Ascending aorta (tissue), 2 donors: ENCODE measurements at regions of chr6 and their contacts with region 1.

Region 1: DNA sequence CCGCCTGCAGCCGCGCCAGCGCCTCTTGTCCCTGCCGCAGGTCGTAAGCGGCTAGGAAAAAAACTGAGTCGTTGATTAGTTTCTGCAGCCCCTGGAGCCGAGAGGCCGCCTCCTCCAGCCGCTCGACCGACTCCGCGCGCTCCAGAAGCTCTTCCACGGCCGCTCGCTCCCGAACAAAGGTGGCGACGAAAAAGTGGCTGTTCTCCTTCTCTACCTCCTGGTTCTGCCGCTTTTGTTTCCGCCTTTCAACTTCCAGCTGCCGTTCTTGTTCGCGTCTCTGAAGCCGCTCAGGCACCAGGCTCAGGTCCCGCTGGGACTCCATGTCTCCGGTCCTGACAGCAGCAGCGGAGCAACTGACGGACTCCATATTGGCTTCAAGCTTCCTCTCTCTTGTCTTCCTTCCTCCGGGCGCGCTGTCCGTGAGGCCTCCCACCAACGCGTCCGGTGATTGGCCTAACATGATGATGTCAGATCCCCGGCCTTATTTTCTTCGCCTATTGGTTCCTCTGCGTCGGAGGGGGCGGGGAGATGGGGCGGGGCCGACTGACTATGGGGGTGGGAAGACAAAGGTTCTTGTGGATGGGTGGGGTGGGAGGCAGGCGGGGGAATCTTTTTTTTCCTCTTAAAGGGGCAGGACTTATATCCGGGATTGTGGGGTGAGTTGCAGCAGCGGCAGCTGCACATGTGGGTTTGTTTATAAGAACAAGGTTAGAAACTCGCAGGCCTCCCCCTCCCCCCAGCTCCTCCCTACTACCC is at the start of gene TBCC:
- DNase-seq: peak; percentile 94 to 99
- H3K4me3 ChIP-seq: peak within 1 kb of the TSS; percentile 83 to 90
- H3K27ac ChIP-seq: peak within 1 kb of the TSS; percentile 88 to 93
- H3K4me1 ChIP-seq: peaks cover 10 to 20% of the 10 kb centered on the region in 2 donors
- H3K27me3 ChIP-seq: no peaks in the 10 kb centered on the region
- CTCF ChIP-seq: no peak
- total RNA-seq, gene TBCC: 50.8 TPM

Region 2: DNA sequence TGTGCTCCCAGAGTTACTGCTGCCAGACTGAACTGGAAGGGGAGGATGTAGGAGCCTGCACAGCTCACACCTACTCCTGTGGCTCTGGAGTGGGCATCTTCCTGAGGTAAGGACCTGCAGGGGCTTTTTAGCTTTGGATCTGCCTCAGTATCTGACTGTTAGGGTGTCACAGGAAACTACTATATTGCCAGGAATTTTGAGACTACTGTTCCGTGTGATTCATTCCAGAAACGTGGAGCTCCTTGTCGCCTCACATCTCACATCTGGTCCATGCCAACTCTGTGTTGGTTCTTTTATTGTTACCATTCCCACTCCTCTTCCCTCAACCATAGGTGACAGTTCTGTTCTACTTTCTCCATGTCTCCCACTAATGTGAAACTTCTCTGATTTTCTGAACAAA is 57.6 kb before region 1 on chr6:
- intact Hi-C with region 1: no loop called
- DNase-seq: no peak
- H3K4me3 ChIP-seq: no peak overlapping the region
- H3K27ac ChIP-seq: no peak overlapping the region
- H3K4me1 ChIP-seq: peaks cover 5 to 18% of the 10 kb centered on the region in 2 donors
- H3K27me3 ChIP-seq: no peaks in the 10 kb centered on the region
- CTCF ChIP-seq: no peak

Region 3: DNA sequence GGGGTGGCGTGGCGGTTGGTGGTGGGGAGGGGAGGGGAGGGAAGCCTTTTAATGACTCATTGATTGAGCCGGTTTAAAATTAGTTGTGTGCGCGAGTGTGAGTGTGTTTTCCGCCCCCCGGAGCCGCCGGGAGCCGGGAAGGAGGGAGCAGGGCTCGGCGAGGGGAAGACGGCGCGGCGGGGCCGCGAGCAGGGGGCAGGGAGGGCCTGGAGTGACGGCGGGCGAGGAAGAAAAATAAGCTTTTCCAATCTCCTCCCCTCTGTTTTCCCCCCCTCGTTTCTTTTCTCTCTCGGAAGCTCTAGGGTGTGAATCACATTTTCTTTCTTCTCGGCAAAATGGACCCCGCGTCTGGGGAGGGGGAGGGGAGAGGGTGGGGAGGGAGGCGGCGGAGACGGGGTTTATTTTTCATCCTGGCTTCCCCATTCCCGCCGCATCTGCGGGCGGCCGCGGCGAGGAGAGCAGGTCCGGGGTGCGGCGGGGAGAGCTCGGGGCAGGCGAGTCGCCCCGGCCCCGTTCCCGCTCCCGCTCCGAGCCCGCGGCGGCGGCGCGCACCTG is 36.8 kb after region 1 on chr6:
- intact Hi-C with region 1: loop called (anchors 1 kb)
- DNase-seq: peak; percentile 35 to 90
- H3K4me3 ChIP-seq: peak overlapping the region; percentile 97 to 99
- H3K27ac ChIP-seq: peak overlapping the region; percentile 99 to 100
- H3K4me1 ChIP-seq: peaks cover 4 to 29% of the 10 kb centered on the region in 2 donors
- H3K27me3 ChIP-seq: no peaks in the 10 kb centered on the region
- CTCF ChIP-seq: peak in 1 of 3 experiments; percentile 2

Region 4: DNA sequence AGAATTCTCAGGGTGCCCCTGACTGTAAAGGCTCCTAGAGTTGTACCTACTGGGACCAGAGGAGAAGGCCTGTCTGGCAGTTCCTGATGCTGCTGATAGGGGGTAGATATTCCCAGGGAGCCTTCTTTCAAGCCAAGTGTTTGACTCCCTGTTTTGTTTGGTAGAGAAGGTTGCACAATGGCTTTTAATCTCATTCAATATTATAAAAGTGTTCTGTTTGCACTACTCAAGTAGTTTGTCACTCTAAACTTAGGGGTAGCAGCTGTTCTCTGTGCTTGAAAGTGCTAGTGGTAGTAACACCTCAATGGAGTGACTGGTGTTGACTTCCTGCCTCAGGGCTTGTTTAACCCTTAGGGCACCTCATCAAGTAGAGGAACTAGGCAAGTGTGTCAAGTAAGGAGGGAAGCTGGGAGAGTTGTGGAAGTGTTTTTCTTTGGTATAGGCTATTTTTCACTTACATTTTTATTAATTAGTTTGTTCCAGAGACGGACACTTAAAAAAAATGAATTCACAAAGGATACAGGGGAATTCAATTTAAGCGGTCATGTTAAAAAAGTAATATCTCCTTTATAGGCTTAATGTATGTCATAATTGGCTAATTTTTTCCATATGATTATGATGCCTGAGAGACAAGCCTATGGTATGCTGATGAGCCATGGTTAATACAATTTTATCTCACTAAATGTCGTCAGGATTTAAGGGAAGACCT is 74.1 kb after region 1 on chr6:
- intact Hi-C with region 1: loop called (anchors 2 kb)
- DNase-seq: no peak
- H3K4me3 ChIP-seq: no peak overlapping the region
- H3K27ac ChIP-seq: peak overlapping the region; percentile 77 to 83
- H3K4me1 ChIP-seq: peaks cover 0 to 15% of the 10 kb centered on the region in 2 donors
- H3K27me3 ChIP-seq: no peaks in the 10 kb centered on the region
- CTCF ChIP-seq: peak in 1 of 3 experiments; percentile 24

Region 5: DNA sequence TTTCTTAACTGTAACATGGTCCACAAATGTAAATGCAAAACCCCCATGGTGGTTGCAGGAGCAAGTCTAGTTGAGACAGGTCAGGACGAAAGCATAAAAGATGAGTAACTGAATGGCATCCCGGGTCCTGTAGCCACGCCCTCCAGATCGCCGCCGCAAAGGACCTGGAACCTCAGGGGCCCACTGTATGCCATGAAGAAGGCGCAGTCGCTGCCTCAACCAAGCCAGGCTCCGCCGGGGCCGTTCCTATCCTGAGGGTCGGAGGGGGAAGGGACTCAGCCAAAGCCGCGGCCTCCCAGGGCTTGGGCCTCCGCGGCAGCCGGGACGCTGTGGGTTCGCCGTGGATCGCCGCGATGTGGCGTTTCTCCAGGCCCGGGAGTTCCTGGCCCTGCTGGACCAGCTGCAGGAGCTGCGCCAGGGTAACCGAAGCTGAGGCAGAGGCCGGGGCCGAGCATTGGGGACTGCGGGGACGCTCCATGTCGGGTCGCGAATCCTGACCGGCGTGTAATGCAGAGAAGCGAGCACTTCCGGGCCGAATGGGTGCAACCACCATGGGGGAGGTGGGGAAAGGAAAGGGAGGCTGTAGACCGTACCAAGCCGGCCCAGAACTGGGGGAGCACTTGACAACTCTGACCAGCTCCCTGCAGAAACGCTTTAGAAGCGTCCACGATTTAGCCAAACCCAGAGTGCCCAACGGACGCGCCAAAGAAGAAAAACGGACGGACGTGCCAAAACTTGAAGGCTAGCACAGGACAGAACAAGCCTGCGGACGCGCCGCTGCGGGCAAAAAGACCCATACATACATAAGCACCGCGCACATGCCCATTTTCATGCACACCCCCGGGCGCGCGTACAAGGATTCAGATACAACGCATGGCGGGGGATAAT is 144.7 kb after region 1 on chr6:
- intact Hi-C with region 1: no loop called
- DNase-seq: peak; percentile 70 to 95
- H3K4me3 ChIP-seq: peak overlapping the region; percentile 86 to 94
- H3K27ac ChIP-seq: peak overlapping the region; percentile 84 to 91
- H3K4me1 ChIP-seq: peaks cover 0 to 5% of the 10 kb centered on the region in 2 donors
- H3K27me3 ChIP-seq: no peaks in the 10 kb centered on the region
- CTCF ChIP-seq: no peak

Region 6: GRCh38 chr6:43174263-43175112 is 428.6 kb after region 1 on chr6:
- intact Hi-C with region 1: loop called (anchors 2 kb)
- DNase-seq: peak; percentile 98 to 99
- H3K4me3 ChIP-seq: peak overlapping the region; percentile 88 to 95
- H3K27ac ChIP-seq: peak overlapping the region; percentile 98
- H3K4me1 ChIP-seq: peaks cover 8 to 30% of the 10 kb centered on the region in 2 donors
- H3K27me3 ChIP-seq: no peaks in the 10 kb centered on the region
- CTCF ChIP-seq: peak in 1 of 3 experiments; percentile 16